Sciatic nerve (tissue), 2 donors: ENCODE measurements at regions of chr4 and their contacts with region 1.

Region 1: GRCh38 chr4:171573181-171573580 is 240.0 kb upstream of the GALNTL6 start:
- DNase-seq: no peak
- ATAC-seq: no peak

Region 2: GRCh38 chr4:171162478-171162877 is 410.7 kb before region 1 on chr4:
- intact Hi-C with region 1: no loop called
- DNase-seq: no peak
- ATAC-seq: no peak

Region 3: GRCh38 chr4:171484681-171485080 is 88.5 kb before region 1 on chr4:
- intact Hi-C with region 1: no loop called
- DNase-seq: no peak
- ATAC-seq: no peak

Region 4: GRCh38 chr4:171602638-171603355 is 29.6 kb after region 1 on chr4:
- intact Hi-C with region 1: loop called (anchors 1 kb)
- DNase-seq: no peak
- ATAC-seq: no peak